A673 (cell line): ENCODE measurements at regions of chr18 and their contacts with region 1.

Region 1: DNA sequence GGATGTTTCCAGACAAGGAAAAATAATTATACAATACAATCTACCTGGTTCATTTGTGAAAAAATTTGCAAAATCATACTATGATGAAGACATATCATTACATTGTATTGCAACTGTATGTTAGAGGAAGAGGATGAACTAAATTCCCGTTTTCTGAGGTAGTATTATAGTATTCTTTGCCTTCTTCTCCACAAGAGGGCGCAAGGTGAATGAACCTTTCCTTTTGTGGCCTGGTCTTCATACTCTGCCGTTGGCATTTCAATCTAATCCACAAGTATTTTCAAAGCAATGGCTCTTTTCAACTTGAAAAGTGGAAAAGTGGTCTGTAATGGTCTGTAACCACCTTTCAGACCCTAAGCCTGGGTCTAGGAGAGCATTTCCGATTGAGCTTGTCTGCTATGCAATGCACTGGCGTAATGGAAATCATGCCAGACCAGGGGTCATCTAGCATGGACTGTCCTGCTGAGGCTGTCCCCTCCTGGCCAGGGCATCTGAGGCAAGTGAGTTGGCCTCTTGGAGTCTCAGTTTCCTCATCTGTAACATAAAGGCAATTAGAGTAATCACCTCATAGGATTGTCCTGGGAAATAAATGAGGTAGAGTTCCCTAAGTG is 30.8 kb upstream of the ZNF396 start:
- DNase-seq: peak; percentile 80
- H3K4me3 ChIP-seq: no peak overlapping the region
- H3K27ac ChIP-seq: no peak overlapping the region
- H3K4me1 ChIP-seq: no peaks in the 10 kb centered on the region
- H3K27me3 ChIP-seq: peaks cover 5% of the 10 kb centered on the region
- CTCF ChIP-seq: peak; percentile 84

Region 2: GRCh38 chr18:35005963-35006577 is 401.9 kb before region 1 on chr18:
- CTCF ChIA-PET with region 1: no interaction called
- POLR2A ChIA-PET with region 1: no interaction called
- intact Hi-C with region 1: no loop called
- DNase-seq: peak; percentile 64
- H3K4me3 ChIP-seq: no peak overlapping the region
- H3K27ac ChIP-seq: no peak overlapping the region
- H3K4me1 ChIP-seq: no peaks in the 10 kb centered on the region
- H3K27me3 ChIP-seq: peaks cover 6% of the 10 kb centered on the region
- CTCF ChIP-seq: peak; percentile 64

Region 3: GRCh38 chr18:35267161-35267651 is 140.8 kb before region 1 on chr18:
- CTCF ChIA-PET with region 1: no interaction called
- POLR2A ChIA-PET with region 1: no interaction called
- intact Hi-C with region 1: no loop called
- DNase-seq: peak; percentile 88
- H3K4me3 ChIP-seq: peak overlapping the region; percentile 56
- H3K27ac ChIP-seq: peak overlapping the region; percentile 60
- H3K4me1 ChIP-seq: no peaks in the 10 kb centered on the region
- H3K27me3 ChIP-seq: no peaks in the 10 kb centered on the region
- CTCF ChIP-seq: no peak

Region 4: GRCh38 chr18:35497370-35498197 is 89.6 kb after region 1 on chr18 and contains the start of gene INO80C:
- CTCF ChIA-PET with region 1: no interaction called
- POLR2A ChIA-PET with region 1: no interaction called
- intact Hi-C with region 1: loop called (anchors 2 kb)
- DNase-seq: peak; percentile 95
- H3K4me3 ChIP-seq: peak within 1 kb of the TSS; percentile 64
- H3K27ac ChIP-seq: peak within 1 kb of the TSS; percentile 91
- H3K4me1 ChIP-seq: peaks cover 6% of the 10 kb centered on the region
- H3K27me3 ChIP-seq: no peaks in the 10 kb centered on the region
- CTCF ChIP-seq: no peak
- total RNA-seq, gene INO80C: 31.3 and 36.6 TPM in 2 replicates

Region 5: DNA sequence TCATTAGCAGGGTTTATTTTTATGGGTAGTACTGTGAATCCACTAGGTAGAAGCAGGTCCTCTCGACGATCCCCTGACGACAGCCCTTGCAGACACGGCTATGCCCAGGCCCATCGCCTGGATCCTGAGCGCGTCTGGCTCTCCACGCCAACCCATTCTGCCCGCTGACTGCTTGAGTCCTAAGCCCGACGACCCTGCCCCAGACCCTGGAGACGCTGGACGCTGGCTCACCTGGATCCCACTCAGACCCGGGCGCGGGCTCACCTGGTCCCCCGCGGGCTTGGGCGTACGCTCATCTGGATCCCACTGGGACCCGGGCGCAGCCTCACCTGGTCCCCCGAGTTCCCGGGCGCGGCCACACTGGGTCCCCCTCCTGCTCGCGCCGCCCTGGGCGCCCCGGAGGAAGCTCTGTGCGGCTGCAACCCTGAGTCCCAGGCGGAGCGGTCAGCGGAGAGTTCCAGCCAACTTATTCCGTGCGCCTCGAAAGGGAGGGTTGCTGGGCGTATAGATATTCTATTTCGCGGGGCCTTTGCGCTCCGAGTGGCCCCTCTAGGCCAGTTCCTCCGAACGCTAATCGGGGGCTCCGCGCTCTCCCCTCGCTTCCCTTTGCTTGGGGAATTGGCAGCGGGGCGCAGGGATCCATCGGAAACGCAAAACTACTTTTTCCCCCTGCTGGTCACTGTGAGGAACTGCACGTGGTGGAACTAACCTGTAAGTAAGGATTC is 542.1 kb after region 1 on chr18:
- CTCF ChIA-PET with region 1: no interaction called
- POLR2A ChIA-PET with region 1: no interaction called
- intact Hi-C with region 1: loop called (anchors 10 kb)
- DNase-seq: peak; percentile 77
- H3K4me3 ChIP-seq: peak overlapping the region; percentile 41
- H3K27ac ChIP-seq: no peak overlapping the region
- H3K4me1 ChIP-seq: no peaks in the 10 kb centered on the region
- H3K27me3 ChIP-seq: no peaks in the 10 kb centered on the region
- CTCF ChIP-seq: peak; percentile 86

Region 6: GRCh38 chr18:36284671-36285295 is 876.8 kb after region 1 on chr18:
- CTCF ChIA-PET with region 1: no interaction called
- POLR2A ChIA-PET with region 1: no interaction called
- intact Hi-C with region 1: loop called (anchors 10 kb)
- DNase-seq: peak; percentile 73
- H3K4me3 ChIP-seq: no peak overlapping the region
- H3K27ac ChIP-seq: no peak overlapping the region
- H3K4me1 ChIP-seq: no peaks in the 10 kb centered on the region
- H3K27me3 ChIP-seq: peaks cover 30% of the 10 kb centered on the region
- CTCF ChIP-seq: peak; percentile 84